ENCODE measurements at regions of chr6 and their contacts with region 1.

Region 1: DNA sequence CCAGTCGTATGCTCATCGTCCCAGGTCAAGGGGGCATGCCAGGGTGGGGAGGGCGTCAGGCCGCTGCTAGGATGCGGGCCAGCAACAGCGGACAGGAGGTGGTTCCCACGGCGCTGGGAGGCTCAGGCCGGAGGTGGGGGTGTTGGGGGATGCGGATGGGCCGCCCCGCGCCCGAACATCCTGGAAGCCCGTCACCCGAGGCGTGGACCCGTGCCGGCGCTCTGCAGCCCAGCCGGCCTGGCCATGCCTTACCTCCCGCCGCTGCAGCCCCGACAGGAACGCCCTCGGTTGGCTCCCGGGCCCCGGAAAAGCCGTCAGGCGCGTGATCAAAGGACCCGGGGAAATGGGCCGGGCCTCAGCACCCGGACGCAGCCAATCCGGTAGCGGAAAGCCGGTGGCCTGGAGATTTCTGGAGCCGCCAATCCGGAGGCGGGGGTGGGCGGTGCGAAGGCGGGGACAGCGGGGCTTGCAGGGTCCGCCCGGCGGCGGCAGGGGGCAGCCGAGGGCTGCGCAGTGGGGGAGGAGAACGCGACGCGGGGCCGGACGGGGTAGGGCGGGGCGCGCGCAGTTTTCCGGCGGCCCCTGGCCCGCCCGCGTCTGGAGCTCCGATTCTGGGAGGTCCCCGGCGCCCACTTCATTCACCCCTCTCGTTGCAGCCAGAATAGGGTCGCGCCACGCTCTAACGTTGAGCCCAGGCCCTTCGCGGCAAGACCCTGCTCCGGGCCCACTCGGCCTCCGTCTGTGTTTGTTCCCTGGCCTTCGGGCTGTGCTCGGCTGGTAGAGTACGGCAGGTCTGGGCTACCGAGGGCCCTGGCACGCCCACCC is at the start of gene SMIM29:
- DNase-seq: peak; percentile 98
- ATAC-seq: peak; percentile 94
- total RNA-seq, gene SMIM29: 20.7 TPM

Region 2: GRCh38 chr6:34106900-34107573 is 141.9 kb before region 1 on chr6:
- intact Hi-C with region 1: no loop called
- DNase-seq: no peak
- ATAC-seq: no peak

Region 3: DNA sequence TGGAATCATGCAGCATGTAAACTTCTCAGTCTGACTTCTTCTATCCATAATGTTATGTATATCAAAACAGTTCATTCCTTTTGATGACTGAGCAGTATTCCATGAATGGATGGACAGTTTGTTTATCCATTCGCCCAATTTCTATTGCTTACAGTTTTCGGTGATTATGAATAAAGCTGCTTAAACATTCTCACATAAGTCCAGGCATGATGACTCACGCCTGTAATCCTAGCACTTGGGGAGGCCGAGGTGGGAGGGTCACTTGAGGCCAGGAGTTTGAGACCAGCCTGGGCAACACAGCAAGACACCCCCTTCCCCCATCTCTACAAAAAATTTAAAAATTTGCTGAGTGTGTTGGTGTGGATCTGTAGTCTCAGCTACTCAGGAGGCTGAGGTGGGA is 35.2 kb before region 1 on chr6:
- intact Hi-C with region 1: no loop called
- DNase-seq: no peak
- ATAC-seq: no peak

Region 4: GRCh38 chr6:34414999-34415858 is 166.3 kb after region 1 on chr6:
- intact Hi-C with region 1: loop called (anchors 1 kb)
- DNase-seq: no peak
- ATAC-seq: peak; percentile 94

Measured in Right ventricle myocardium inferior (tissue), 1 donor.